ENCODE measurements at regions of chr4 and their contacts with region 1.

Region 1: GRCh38 chr4:55363691-55364351 is 17.8 kb downstream of the SRD5A3 start:
- DNase-seq: no peak
- H3K4me3 ChIP-seq: no peak overlapping the region
- H3K27ac ChIP-seq: no peak overlapping the region
- H3K4me1 ChIP-seq: peaks cover 6 to 20% (median 11%) of the 10 kb centered on the region in 4 experiments; a peak in 6 of 7 replicates
- H3K27me3 ChIP-seq: no peaks in the 10 kb centered on the region
- CTCF ChIP-seq: no peak
- EP300 ChIP-seq: no peak
- POLR2A ChIP-seq: no peak
- RAD21 ChIP-seq: no peak

Region 2: DNA sequence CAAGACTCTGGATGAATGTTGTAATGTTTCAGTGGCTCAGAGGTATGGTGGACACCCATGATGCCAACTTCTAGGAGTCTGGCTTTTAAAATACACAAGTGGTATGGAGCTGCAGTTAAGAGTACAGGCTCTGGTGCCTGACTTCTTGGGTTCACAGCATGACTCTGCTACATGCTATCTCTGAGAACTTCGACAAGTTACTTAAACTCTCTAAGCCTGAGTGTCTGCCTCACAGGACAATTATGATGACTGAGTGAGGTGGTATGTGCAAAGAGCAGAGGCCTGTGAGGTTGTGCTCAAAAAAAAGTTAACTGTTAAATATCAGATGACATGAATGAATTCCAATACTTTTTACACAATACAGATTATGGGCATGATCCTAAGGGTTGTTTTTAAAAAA is 108.6 kb before region 1 on chr4:
- CTCF ChIA-PET with region 1: no interaction called
- POLR2A ChIA-PET with region 1: no interaction called
- DNase-seq: no peak
- H3K4me3 ChIP-seq: no peak overlapping the region
- H3K27ac ChIP-seq: no peak overlapping the region
- H3K4me1 ChIP-seq: peaks cover 2 to 7% (median 3%) of the 10 kb centered on the region in 4 experiments; a peak in 4 of 7 replicates
- H3K27me3 ChIP-seq: no peaks in the 10 kb centered on the region; a peak in 1 of 7 replicates
- CTCF ChIP-seq: no peak
- EP300 ChIP-seq: no peak
- POLR2A ChIP-seq: no peak
- RAD21 ChIP-seq: no peak

Region 3: GRCh38 chr4:55345980-55346850 is 17.6 kb before region 1 on chr4 and contains the start of gene SRD5A3:
- CTCF ChIA-PET with region 1: interaction called, 15 read pairs
- POLR2A ChIA-PET with region 1: interaction called, 3 read pairs
- DNase-seq: peak; percentile 44 to 95
- H3K4me3 ChIP-seq: peak within 1 kb of the TSS; percentile 42 to 79 (median 64)
- H3K27ac ChIP-seq: peak within 1 kb of the TSS; percentile 46; the same call in 1 of the 2 replicates
- H3K4me1 ChIP-seq: peaks cover 0 to 9% (median 5%) of the 10 kb centered on the region in 4 experiments
- H3K27me3 ChIP-seq: no peaks in the 10 kb centered on the region
- CTCF ChIP-seq: peak; percentile 69 to 78 (median 71)
- EP300 ChIP-seq: no peak
- POLR2A ChIP-seq: peak in 1 of 2 experiments; percentile 56; a peak in 2 of 3 replicates
- RAD21 ChIP-seq: peak; percentile 36 to 74; a peak in 3 of 4 replicates
- total RNA-seq, gene SRD5A3: 19.4 and 19.6 TPM in 2 replicates

Region 4: DNA sequence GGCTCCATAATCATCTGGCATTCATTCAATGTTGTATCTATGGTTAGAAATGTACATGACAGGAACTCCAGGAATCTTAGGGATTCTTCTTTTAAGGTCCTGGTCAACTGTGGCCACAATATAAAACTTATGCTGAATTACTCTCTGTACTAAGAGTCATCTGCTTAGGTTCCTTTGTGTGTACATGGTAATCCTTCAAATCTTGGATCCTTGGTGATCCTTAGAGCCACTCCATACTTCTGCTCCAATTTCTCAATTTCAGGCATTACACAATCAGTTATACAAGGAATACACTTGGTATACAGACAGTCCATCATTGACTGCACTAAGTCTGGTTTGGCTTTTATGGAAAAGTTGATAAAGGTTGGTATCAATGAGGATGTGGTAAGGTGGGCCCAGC is 12.0 kb before region 1 on chr4:
- CTCF ChIA-PET with region 1: interaction called, 14 read pairs
- POLR2A ChIA-PET with region 1: interaction called, 6 read pairs
- DNase-seq: no peak
- H3K4me3 ChIP-seq: no peak overlapping the region
- H3K27ac ChIP-seq: no peak overlapping the region
- H3K4me1 ChIP-seq: peaks cover 0 to 5% (median under 1%) of the 10 kb centered on the region in 4 experiments; a peak in 6 of 7 replicates
- H3K27me3 ChIP-seq: no peaks in the 10 kb centered on the region
- CTCF ChIP-seq: no peak
- EP300 ChIP-seq: no peak
- POLR2A ChIP-seq: no peak
- RAD21 ChIP-seq: no peak